Prostate gland (tissue), 2 donors: ENCODE measurements at regions of chr5 and their contacts with region 1.

Region 1: GRCh38 chr5:111072949-111073682 is 1.6 kb downstream of the TSLP start:
- DNase-seq: peak; percentile 40
- H3K4me3 ChIP-seq: peak overlapping the region; percentile 35 to 41
- H3K27ac ChIP-seq: peak overlapping the region; percentile 26 to 43
- H3K4me1 ChIP-seq: no peaks in the 10 kb centered on the region
- H3K27me3 ChIP-seq: peaks cover 5% of the 10 kb centered on the region
- CTCF ChIP-seq: no peak
- POLR2A ChIP-seq: no peak

Region 2: GRCh38 chr5:110757118-110757729 is 315.9 kb before region 1 on chr5:
- intact Hi-C with region 1: loop called (anchors 10 kb)
- DNase-seq: no peak
- H3K4me3 ChIP-seq: no peak overlapping the region
- H3K27ac ChIP-seq: no peak overlapping the region
- H3K4me1 ChIP-seq: no peaks in the 10 kb centered on the region
- H3K27me3 ChIP-seq: no peaks in the 10 kb centered on the region
- CTCF ChIP-seq: peak in 3 of 4 experiments; percentile 57 to 62 (median 62)
- POLR2A ChIP-seq: no peak